ENCODE measurements at regions of chr11 and their contacts with region 1.

Region 1: DNA sequence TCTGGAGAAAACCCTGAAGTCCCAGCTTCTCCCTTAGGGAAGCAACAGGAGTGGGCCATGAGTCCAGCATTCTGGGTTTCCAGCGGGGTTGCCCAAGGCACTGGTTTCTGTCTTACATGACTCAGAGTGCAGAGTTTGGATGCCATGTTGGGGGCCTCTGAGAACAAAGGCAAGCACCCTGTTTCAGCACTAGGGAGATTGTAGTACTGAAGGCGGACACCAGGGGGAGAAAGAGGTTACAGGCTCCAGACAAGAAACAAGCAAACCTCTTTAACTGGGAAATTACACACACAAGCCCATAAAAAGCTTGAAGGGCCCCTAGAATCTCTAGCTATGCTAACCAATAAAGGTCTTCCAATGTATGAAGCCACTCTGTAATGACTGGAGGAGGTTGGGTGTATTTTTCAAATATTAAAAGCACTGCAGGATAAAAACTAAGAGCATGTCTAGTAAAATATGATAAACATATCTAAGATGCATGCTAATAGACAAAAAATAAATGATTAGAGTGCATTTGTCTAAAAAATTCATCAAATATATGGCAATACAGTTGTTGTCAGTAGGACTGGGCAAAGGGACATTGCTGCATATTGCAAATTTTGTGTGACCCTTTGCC is 7.1 kb downstream of the MS4A6E start:
- DNase-seq: peak; percentile 76
- H3K4me3 Mint-ChIP-seq: no peak overlapping the region
- H3K27ac Mint-ChIP-seq: no peak overlapping the region
- H3K4me1 Mint-ChIP-seq: no peaks in the 10 kb centered on the region
- H3K27me3 Mint-ChIP-seq: peaks cover 23% of the 10 kb centered on the region
- CTCF ChIP-seq: peak; percentile 77

Region 2: DNA sequence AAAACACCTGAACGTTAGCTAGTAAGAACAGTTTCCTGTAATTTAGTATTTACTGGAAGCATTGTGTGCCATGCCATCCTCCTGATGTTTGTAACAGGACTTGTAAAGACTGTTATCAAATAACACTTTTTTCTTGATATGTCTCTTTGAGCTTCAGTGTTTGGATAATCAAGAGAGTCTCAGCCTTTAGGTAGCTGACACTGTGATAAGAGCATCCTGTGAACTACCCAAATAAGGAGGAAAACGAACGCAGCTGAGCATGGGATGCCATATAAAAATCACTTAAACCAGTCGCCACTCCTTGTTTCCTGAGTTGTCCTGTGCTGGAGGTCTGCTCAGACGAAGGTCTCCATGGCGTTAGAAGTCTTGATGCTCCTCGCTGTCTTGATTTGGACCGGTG is 294.0 kb before region 1 on chr11 and contains the start of gene OOSP2:
- CTCF ChIA-PET with region 1: no interaction called
- POLR2A ChIA-PET with region 1: no interaction called
- intact Hi-C with region 1: no loop called
- DNase-seq: no peak
- H3K4me3 Mint-ChIP-seq: no peak within 1 kb of the TSS
- H3K27ac Mint-ChIP-seq: no peak within 1 kb of the TSS
- H3K4me1 Mint-ChIP-seq: no peaks in the 10 kb centered on the region
- H3K27me3 Mint-ChIP-seq: peaks cover 20% of the 10 kb centered on the region
- CTCF ChIP-seq: no peak
- total RNA-seq, gene OOSP2: not detected in 2 replicates

Region 3: GRCh38 chr11:60314635-60315321 is 19.3 kb before region 1 on chr11:
- CTCF ChIA-PET with region 1: interaction called, 11 read pairs
- POLR2A ChIA-PET with region 1: no interaction called
- intact Hi-C with region 1: no loop called
- DNase-seq: no peak
- H3K4me3 Mint-ChIP-seq: no peak overlapping the region
- H3K27ac Mint-ChIP-seq: no peak overlapping the region
- H3K4me1 Mint-ChIP-seq: no peaks in the 10 kb centered on the region
- H3K27me3 Mint-ChIP-seq: no peaks in the 10 kb centered on the region
- CTCF ChIP-seq: no peak

Region 4: DNA sequence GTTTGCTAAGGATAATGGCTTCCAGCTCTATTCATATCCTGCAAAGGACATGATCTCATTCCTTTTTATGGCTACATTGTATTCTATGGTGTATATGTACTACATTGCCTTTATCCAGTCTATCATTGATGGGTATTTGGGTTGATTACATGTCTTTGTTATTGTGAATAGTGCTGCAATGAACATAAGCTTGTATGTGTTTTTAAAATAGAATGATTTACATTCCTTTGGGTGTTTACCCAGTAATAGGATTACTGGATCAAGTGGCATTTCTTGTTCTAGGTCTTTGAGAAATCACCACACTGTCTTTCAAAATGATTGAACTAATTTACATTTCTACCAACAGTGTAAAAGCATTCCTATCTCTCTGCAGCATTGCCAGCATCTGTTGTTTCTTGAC is 13.1 kb before region 1 on chr11:
- CTCF ChIA-PET with region 1: interaction called, 13 read pairs
- POLR2A ChIA-PET with region 1: no interaction called
- intact Hi-C with region 1: no loop called
- DNase-seq: no peak
- H3K4me3 Mint-ChIP-seq: no peak overlapping the region
- H3K27ac Mint-ChIP-seq: no peak overlapping the region
- H3K4me1 Mint-ChIP-seq: no peaks in the 10 kb centered on the region
- H3K27me3 Mint-ChIP-seq: no peaks in the 10 kb centered on the region
- CTCF ChIP-seq: no peak

Region 5: GRCh38 chr11:60345489-60345888 is 11.4 kb after region 1 on chr11:
- CTCF ChIA-PET with region 1: interaction called, 37 read pairs
- POLR2A ChIA-PET with region 1: no interaction called
- intact Hi-C with region 1: loop called (anchors 1 kb)
- DNase-seq: peak; percentile 42
- H3K4me3 Mint-ChIP-seq: no peak overlapping the region
- H3K27ac Mint-ChIP-seq: no peak overlapping the region
- H3K4me1 Mint-ChIP-seq: no peaks in the 10 kb centered on the region
- H3K27me3 Mint-ChIP-seq: peaks cover 72% of the 10 kb centered on the region
- CTCF ChIP-seq: peak; percentile 24

Measured in MCF 10A (cell line).